ENCODE measurements at regions of chr10 and their contacts with region 1.

Region 1: GRCh38 chr10:59808896-59809643 is 55.8 kb upstream of the MRLN start:
- DNase-seq: peak; percentile 64 to 85 (median 71)
- ATAC-seq: peak; percentile 98
- H3K4me3 ChIP-seq: no peak overlapping the region
- H3K27ac ChIP-seq: no peak overlapping the region
- H3K4me1 ChIP-seq: no peaks in the 10 kb centered on the region
- H3K27me3 ChIP-seq: no peaks in the 10 kb centered on the region; a peak in 1 of 5 replicates
- CTCF ChIP-seq: peak; percentile 88 to 90 (median 89)
- EP300 ChIP-seq: no peak
- POLR2A ChIP-seq: no peak
- RAD21 ChIP-seq: peak; percentile 81 to 85

Region 2: DNA sequence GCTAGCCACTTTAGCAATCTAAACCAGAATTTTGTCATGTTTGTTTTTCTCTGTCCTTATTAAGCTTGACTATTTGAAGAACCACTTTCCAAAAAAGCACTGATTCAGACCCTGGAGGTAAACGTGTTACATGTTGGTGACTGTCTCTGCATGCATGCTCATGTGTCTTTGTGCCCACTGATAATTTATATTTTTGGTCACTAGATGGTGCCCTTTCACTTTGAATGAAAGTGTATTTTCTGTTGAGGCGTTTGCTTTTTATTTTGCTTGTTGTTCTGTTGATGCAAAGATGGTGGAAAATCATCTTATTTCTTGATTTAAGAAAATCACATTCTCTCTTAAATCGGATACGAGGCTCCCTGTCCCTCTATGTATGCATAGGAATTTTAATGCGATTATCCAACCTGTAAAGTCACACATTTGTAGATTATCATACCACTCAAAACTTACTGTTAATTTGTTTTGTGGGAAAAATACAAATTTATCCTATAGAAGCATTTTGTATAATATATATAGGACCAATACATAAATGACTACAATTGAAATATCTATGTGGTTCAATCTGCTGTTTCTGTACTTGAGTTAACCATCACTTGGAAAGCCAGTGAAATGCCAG is 1027.1 kb before region 1 on chr10:
- CTCF ChIA-PET with region 1: no interaction called
- POLR2A ChIA-PET with region 1: no interaction called
- in situ Hi-C with region 1: loop called (anchors 25 kb)
- intact Hi-C with region 1: loop called (anchors 5 kb)
- DNase-seq: peak; percentile 23 to 48 (median 44)
- ATAC-seq: peak; percentile 57; the same call in 1 of the 3 replicates
- H3K4me3 ChIP-seq: no peak overlapping the region
- H3K27ac ChIP-seq: no peak overlapping the region
- H3K4me1 ChIP-seq: no peaks in the 10 kb centered on the region
- H3K27me3 ChIP-seq: no peaks in the 10 kb centered on the region
- CTCF ChIP-seq: peak; percentile 29 to 71 (median 46); a peak in 4 of 6 replicates
- EP300 ChIP-seq: no peak
- POLR2A ChIP-seq: no peak
- RAD21 ChIP-seq: peak; percentile 60 to 74

Region 3: DNA sequence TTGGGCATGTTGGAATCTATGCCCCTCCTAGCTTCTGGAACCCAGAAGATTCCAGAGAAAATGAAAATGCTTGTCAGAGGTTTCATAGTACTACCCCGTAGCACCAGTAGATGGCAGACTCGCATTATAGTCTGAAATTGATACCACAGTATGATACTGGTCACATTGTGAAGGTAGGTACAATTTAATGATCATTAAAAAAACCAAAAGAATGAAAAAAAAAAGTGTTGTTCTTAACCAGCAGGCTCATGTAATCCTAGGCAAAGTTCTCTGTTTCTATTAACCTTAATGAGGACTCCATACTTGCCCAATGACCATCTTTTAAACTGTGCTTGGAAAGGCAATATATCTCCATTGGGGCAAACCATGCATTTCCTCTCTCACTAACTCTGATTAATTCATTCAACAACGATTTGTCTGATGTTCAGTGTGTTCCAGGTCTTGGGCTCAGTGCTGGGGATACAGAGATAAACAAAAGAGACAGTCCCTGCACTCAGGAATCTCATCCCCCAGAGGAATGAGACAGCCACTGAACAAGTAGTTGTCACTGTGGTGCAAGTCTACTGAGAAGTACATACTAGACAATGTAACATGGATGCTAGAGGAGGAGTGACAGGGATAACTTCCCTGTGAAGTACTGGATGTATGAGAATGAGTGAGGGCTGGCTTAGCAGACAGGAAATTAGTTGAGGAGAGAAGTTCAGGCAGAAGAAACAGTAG is 856.2 kb before region 1 on chr10:
- CTCF ChIA-PET with region 1: interaction called, 3 read pairs
- POLR2A ChIA-PET with region 1: no interaction called
- in situ Hi-C with region 1: loop called (anchors 25 kb)
- intact Hi-C with region 1: no loop called
- DNase-seq: peak; percentile 23 to 46 (median 39)
- ATAC-seq: peak; percentile 69; the same call in 2 of the 3 replicates
- H3K4me3 ChIP-seq: no peak overlapping the region
- H3K27ac ChIP-seq: no peak overlapping the region
- H3K4me1 ChIP-seq: no peaks in the 10 kb centered on the region
- H3K27me3 ChIP-seq: no peaks in the 10 kb centered on the region
- CTCF ChIP-seq: peak; percentile 33 to 66 (median 63); a peak in 5 of 6 replicates
- EP300 ChIP-seq: no peak
- POLR2A ChIP-seq: no peak
- RAD21 ChIP-seq: peak; percentile 54 to 74

Region 4: DNA sequence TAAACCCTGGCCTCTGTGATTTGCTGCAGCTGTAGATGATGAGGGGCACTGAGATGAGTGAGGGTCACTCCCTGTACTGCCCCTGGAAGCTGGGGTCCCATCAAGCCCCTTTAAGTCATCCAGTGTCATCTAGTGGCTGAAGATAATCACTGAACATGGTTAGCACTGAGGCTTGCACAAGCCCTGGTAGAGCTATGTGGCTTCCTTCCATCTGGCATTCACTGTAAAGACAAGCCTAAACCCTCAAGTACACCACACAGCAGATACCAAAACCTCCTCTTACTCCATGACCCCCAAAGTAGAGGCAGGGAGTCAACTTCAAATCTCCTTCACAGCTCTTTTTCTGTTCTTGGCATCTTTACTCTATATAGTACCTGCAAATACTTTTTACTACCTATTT is 16.9 kb after region 1 on chr10:
- CTCF ChIA-PET with region 1: no interaction called
- POLR2A ChIA-PET with region 1: no interaction called
- in situ Hi-C with region 1: no loop called
- intact Hi-C with region 1: no loop called
- DNase-seq: no peak
- ATAC-seq: no peak
- H3K4me3 ChIP-seq: no peak overlapping the region
- H3K27ac ChIP-seq: no peak overlapping the region
- H3K4me1 ChIP-seq: no peaks in the 10 kb centered on the region
- H3K27me3 ChIP-seq: no peaks in the 10 kb centered on the region
- CTCF ChIP-seq: no peak
- EP300 ChIP-seq: no peak
- POLR2A ChIP-seq: no peak
- RAD21 ChIP-seq: no peak

Measured in K562 (cell line).